PC-9 (cell line): ENCODE measurements at regions of chr1 and their contacts with region 1.

Region 1: DNA sequence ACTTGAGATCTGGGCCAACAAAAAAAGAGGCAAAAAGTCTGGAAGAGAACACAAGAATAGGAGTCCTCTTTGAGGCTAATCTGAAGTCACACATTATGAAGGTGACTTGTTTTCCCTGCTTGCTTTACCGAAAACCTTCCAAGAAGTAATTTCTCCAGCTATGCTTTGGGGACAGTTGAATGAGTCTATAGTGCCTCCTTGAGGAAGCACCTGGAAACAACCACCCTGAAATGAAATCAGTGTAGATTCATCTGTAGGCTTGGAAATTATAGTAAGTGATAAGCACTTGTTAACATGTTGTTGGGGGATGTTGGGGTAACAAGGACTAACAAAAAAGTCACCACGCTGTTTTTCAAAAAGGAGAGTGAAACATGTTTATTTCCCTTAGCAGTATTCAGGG is 23.4 kb upstream of the RPTN start:
- DNase-seq: no peak
- H3K4me3 ChIP-seq: no peak overlapping the region
- H3K27ac ChIP-seq: no peak overlapping the region
- H3K4me1 ChIP-seq: peaks cover 20% of the 10 kb centered on the region
- H3K27me3 ChIP-seq: no peaks in the 10 kb centered on the region
- CTCF ChIP-seq: peak; percentile 71

Region 2: DNA sequence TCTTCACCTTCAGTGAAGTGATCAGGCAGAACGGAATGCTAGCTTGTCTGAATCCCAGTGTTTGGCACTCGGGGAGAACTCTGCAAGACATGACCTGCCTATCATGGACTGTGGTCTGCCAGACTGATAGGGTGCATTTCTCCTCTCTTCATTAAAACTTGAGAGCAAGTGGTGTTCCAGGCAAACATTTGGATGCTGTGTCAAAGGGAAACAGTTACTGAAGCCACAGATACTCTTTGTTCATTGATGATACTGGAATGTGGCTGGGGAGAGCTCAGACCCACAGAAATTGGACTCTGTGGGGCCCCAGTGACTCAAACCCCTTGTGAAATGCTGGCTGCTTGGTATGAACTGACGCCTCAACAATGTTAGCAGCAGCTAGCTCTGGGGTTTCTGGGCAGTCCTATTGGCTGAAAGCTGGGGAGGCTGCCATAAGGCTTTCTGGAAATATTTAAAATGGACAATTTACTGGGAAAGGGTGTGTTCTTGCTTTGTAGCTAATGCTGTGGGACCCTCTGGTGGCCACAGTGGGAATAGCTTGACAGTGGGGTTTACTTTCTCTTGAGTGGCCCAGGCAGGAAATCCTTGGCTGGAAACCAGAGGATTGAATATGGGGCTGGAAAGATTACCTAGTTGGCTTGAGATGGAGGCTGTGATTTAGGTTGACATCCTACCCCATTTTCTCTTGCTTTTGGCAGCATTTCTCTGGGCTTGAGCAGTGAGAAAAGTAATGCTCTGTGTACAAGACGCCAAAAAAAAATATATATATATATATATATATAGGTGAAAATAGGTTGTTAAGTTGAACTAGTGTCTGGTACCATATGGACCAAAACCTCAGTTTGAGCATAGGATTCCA is 180.8 kb before region 1 on chr1:
- CTCF ChIA-PET with region 1: no interaction called
- POLR2A ChIA-PET with region 1: no interaction called
- intact Hi-C with region 1: no loop called
- DNase-seq: peak; percentile 87 to 93
- H3K4me3 ChIP-seq: no peak overlapping the region
- H3K27ac ChIP-seq: peak overlapping the region; percentile 90
- H3K4me1 ChIP-seq: peaks cover 57% of the 10 kb centered on the region
- H3K27me3 ChIP-seq: no peaks in the 10 kb centered on the region
- CTCF ChIP-seq: peak; percentile 94

Region 3: GRCh38 chr1:152167835-152168519 is 14.5 kb before region 1 on chr1:
- CTCF ChIA-PET with region 1: interaction called, 4 read pairs
- POLR2A ChIA-PET with region 1: no interaction called
- intact Hi-C with region 1: loop called (anchors 2 kb)
- DNase-seq: peak; percentile 82 to 96
- H3K4me3 ChIP-seq: no peak overlapping the region
- H3K27ac ChIP-seq: peak overlapping the region; percentile 73
- H3K4me1 ChIP-seq: peaks cover 70% of the 10 kb centered on the region
- H3K27me3 ChIP-seq: no peaks in the 10 kb centered on the region
- CTCF ChIP-seq: no peak

Region 4: GRCh38 chr1:152525080-152525641 is 342.7 kb after region 1 on chr1:
- CTCF ChIA-PET with region 1: no interaction called
- POLR2A ChIA-PET with region 1: no interaction called
- intact Hi-C with region 1: no loop called
- DNase-seq: no peak
- H3K4me3 ChIP-seq: no peak overlapping the region
- H3K27ac ChIP-seq: no peak overlapping the region
- H3K4me1 ChIP-seq: no peaks in the 10 kb centered on the region
- H3K27me3 ChIP-seq: no peaks in the 10 kb centered on the region
- CTCF ChIP-seq: no peak

Region 5: GRCh38 chr1:153150846-153151245 is 968.4 kb after region 1 on chr1 and contains the start of gene SPRR2G:
- CTCF ChIA-PET with region 1: no interaction called
- POLR2A ChIA-PET with region 1: interaction called, 12 read pairs
- intact Hi-C with region 1: no loop called
- DNase-seq: no peak
- H3K4me3 ChIP-seq: no peak within 1 kb of the TSS
- H3K27ac ChIP-seq: no peak within 1 kb of the TSS
- H3K4me1 ChIP-seq: no peaks in the 10 kb centered on the region
- H3K27me3 ChIP-seq: peaks cover 11% of the 10 kb centered on the region
- CTCF ChIP-seq: no peak
- total RNA-seq, gene SPRR2G: not detected in 2 replicates